Activated CD4-positive, alpha-beta T cell treated with anti-CD3 and anti-CD28 coated beads, Interleukin-2, amount 10 ng/mL, durations not matched to agents 24 days and 14 days (primary cell): ENCODE measurements at regions of chr2 and their contacts with region 1.

Region 1: GRCh38 chr2:48420512-48421197 is 109.3 kb upstream of the STON1 start:
- DNase-seq: peak; percentile 98
- H3K4me3 Mint-ChIP-seq: peak overlapping the region; percentile 41
- H3K27ac Mint-ChIP-seq: peak overlapping the region; percentile 77
- H3K4me1 Mint-ChIP-seq: peaks cover 36% of the 10 kb centered on the region
- H3K27me3 Mint-ChIP-seq: no peaks in the 10 kb centered on the region

Region 2: DNA sequence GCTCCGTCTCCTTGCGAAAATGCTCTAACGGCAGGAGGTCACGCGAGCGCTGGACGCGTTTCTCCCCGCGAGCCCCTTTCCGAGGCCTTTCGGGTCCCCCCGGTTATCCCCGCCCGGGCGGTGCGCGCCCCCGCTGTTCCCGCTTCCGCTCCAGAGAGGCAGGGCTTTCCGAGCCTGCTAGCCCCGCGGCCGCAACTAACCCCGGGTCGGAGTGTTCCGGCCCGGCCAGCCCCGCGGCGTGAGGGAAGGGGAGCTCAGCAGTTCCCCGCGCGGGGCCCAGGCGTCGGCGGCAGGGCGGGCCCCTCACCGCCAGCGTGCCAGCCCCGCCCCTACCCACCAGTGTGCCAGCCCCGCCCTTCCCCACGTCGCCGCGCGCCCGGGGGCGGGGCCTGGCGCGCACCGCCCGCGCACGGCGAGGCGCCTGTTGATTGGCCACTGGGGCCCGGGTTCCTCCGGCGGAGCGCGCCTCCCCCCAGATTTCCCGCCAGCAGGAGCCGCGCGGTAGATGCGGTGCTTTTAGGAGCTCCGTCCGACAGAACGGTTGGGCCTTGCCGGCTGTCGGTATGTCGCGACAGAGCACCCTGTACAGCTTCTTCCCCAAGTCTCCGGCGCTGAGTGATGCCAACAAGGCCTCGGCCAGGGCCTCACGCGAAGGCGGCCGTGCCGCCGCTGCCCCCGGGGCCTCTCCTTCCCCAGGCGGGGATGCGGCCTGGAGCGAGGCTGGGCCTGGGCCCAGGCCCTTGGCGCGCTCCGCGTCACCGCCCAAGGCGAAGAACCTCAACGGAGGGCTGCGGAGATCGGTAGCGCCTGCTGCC is 637.8 kb before region 1 on chr2 and contains the start of gene MSH6:
- intact Hi-C with region 1: loop called (anchors 5 kb)
- DNase-seq: peak; percentile 97
- H3K4me3 Mint-ChIP-seq: peak within 1 kb of the TSS; percentile 90
- H3K27ac Mint-ChIP-seq: peak within 1 kb of the TSS; percentile 89
- H3K4me1 Mint-ChIP-seq: peaks cover 14% of the 10 kb centered on the region
- H3K27me3 Mint-ChIP-seq: no peaks in the 10 kb centered on the region
- total RNA-seq, gene MSH6: 148 and 153 TPM in 2 replicates

Region 3: GRCh38 chr2:47862949-47863348 is 557.7 kb before region 1 on chr2:
- intact Hi-C with region 1: loop called (anchors 5 kb)
- DNase-seq: no peak
- H3K4me3 Mint-ChIP-seq: no peak overlapping the region
- H3K27ac Mint-ChIP-seq: no peak overlapping the region
- H3K4me1 Mint-ChIP-seq: peaks cover 13% of the 10 kb centered on the region
- H3K27me3 Mint-ChIP-seq: no peaks in the 10 kb centered on the region

Region 4: GRCh38 chr2:48248241-48248933 is 172.3 kb before region 1 on chr2:
- intact Hi-C with region 1: loop called (anchors 1 kb)
- DNase-seq: no peak
- H3K4me3 Mint-ChIP-seq: no peak overlapping the region
- H3K27ac Mint-ChIP-seq: no peak overlapping the region
- H3K4me1 Mint-ChIP-seq: peaks cover 9% of the 10 kb centered on the region
- H3K27me3 Mint-ChIP-seq: peaks cover 5% of the 10 kb centered on the region

Region 5: GRCh38 chr2:48356701-48357325 is 63.8 kb before region 1 on chr2:
- intact Hi-C with region 1: loop called (anchors 1 kb)
- DNase-seq: peak; percentile 85
- H3K4me3 Mint-ChIP-seq: peak overlapping the region; percentile 75
- H3K27ac Mint-ChIP-seq: peak overlapping the region; percentile 94
- H3K4me1 Mint-ChIP-seq: peaks cover 48% of the 10 kb centered on the region
- H3K27me3 Mint-ChIP-seq: no peaks in the 10 kb centered on the region

Region 6: GRCh38 chr2:48812376-48812775 is 391.7 kb after region 1 on chr2:
- intact Hi-C with region 1: no loop called
- DNase-seq: no peak
- H3K4me3 Mint-ChIP-seq: no peak overlapping the region
- H3K27ac Mint-ChIP-seq: no peak overlapping the region
- H3K4me1 Mint-ChIP-seq: no peaks in the 10 kb centered on the region
- H3K27me3 Mint-ChIP-seq: no peaks in the 10 kb centered on the region